ENCODE measurements at regions of chr2 and their contacts with region 1.

Region 1: DNA sequence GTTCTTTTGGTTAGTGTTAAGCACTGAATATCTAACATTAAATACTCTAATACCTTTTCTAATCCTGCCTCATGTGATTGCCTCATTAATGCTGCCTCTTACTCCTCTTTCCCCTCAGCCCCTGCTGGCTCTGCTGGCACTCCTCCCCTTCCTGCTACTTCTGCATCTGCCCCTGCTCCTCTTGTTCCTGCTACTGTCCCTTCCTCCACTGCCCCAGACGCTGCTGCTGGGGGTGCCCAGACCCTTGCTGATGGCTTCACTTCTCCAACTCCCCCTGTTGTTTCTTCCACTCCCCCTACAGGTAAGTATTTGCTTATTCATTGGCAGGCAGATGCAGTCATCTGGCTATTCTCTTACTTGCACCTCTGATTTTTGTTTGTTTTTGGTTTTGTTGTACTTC is 68.5 kb downstream of the ABI2 start:
- DNase-seq: peak; percentile 6
- H3K4me3 ChIP-seq: no peak overlapping the region
- H3K27ac ChIP-seq: no peak overlapping the region
- H3K4me1 ChIP-seq: peaks cover 4% of the 10 kb centered on the region
- H3K27me3 ChIP-seq: no peaks in the 10 kb centered on the region
- CTCF ChIP-seq: peak; percentile 39; the same call in 1 of the 2 replicates

Region 2: DNA sequence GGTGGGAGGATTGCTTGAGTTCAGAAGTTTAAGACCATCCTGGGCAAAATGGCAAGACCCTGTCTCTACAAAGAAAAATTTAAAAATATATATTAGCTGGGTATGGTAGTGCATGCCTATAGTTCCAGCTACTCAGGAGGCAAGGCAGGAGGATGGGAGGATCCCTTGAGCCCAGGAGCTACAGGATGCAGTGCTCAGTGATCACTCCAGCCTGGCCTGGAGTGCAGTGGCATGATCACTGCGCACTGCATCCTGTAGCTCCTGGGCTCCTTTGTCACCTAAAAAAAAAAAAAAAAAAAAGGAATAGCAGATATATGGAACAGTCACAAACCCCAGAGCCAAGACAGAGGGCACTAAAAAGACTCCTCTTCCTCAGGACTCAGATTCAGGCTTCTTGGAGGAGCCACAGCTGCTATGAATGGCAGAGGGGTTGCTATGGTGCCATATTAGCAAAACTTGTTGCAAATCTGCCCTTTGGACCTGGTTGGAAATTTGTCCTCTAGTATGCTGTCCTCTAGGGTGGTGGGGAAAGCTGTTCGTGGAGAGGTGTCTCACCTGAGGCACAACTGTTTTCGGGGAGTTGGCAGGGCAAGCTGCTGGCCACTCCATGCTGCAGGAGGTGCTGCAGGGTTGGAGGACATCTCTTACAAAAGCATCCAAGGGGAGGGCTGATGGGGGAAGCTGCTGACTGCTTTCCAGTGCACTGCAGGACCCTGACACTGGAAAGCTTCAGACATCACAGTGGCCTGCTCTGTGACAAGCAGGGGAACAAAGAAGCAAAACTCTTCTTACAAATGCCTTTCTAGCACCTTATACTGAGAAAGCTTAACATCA is 135.1 kb before region 1 on chr2:
- CTCF ChIA-PET with region 1: no interaction called
- POLR2A ChIA-PET with region 1: no interaction called
- intact Hi-C with region 1: loop called (anchors 10 kb)
- DNase-seq: peak; percentile 6
- H3K4me3 ChIP-seq: no peak overlapping the region
- H3K27ac ChIP-seq: no peak overlapping the region
- H3K4me1 ChIP-seq: no peaks in the 10 kb centered on the region
- H3K27me3 ChIP-seq: no peaks in the 10 kb centered on the region
- CTCF ChIP-seq: no peak